ENCODE measurements at regions of chr17 and their contacts with region 1.

Region 1: GRCh38 chr17:21043286-21044232 is 748 bp upstream of the USP22 start:
- DNase-seq: peak; percentile 61
- ATAC-seq: peak; percentile 96
- H3K4me3 ChIP-seq: peak overlapping the region; percentile 52 to 54
- H3K27ac ChIP-seq: peak overlapping the region; percentile 90
- H3K4me1 ChIP-seq: peaks cover 13% of the 10 kb centered on the region; the same call in 1 of the 2 replicates
- H3K27me3 ChIP-seq: no peaks in the 10 kb centered on the region
- CTCF ChIP-seq: peak; percentile 94

Region 2: DNA sequence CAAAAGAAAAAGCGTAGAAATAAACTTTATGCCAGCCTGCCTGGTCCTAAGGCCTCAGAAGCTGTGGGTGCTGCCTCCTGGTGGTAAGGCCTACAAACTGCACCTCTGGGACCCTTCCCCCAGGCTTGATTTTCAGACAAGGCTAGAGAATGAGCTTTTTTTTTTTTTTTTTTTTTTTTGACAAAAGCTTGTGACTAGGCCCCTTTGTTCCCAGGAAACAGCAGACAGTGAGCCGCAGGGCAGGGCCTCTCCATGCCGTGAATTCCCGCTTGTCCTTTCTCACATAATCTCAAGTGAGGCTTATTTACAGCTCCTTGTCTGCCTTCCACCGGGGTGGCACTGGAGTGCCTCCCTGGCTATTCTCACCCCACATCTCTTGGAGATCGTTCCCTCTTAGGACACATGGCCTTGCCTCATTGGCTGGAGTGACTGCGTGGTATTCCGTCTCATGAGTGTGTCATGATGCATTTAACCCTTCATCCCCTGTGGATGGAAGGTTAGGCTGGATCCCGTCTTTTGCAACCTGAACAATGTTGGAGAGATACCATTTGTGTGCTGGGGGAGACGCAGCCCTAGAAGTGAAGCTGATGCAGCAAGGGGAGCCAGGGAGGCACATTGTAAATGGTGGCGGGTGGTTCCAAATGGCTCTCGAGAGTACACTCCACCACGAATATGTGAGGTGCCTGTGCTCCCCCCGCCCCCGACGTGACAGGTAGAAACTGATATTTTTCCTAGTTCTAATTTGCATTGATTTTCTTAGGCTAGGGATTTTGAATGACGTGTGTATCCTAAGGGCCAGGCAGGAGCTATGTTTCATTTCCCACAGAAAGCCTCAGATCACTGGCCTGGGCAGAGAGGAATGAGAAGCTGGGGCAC is 50.3 kb before region 1 on chr17:
- CTCF ChIA-PET with region 1: no interaction called
- POLR2A ChIA-PET with region 1: no interaction called
- in situ Hi-C with region 1: no loop called
- intact Hi-C with region 1: no loop called
- DNase-seq: peak; percentile 35
- ATAC-seq: no peak
- H3K4me3 ChIP-seq: no peak overlapping the region
- H3K27ac ChIP-seq: no peak overlapping the region
- H3K4me1 ChIP-seq: no peaks in the 10 kb centered on the region
- H3K27me3 ChIP-seq: no peaks in the 10 kb centered on the region
- CTCF ChIP-seq: peak; percentile 93

Region 3: DNA sequence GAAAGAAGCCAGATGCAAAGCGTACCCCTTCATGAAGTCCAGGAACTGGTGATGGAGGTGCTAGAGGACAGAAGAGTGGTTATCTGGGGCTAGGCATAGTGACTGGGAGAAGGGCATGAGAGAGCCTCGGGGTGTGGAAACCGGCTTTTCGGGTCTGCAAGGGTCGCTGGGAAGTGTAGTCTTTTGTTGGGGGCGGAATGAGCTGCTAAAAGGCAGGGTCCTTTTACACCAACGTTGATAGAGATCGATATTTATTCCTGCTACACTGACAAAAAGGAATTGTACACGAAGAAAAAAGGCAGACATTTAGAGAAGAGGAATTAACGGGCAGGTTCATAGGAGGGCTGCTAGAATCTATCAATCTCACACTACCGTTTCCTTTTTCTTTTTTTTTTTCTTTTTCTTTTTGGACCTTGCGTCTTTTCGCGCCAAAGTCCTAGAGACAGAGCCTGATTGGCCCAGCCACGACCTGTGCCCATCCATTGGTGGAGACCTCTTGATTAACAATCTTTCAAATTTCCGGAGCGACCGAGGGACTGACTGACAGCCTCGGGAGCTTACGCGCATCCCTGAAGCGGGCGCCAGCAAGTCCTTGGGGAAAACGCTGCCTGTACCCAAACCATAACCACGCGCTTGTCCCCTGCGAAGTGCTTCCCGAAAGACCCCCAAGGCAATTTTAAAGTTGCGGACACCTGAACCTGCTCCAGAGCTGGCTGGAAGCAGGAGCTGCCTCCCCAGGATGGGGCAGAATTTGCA is 55.6 kb after region 1 on chr17:
- CTCF ChIA-PET with region 1: interaction called, 19 read pairs
- POLR2A ChIA-PET with region 1: interaction called, 3 read pairs
- in situ Hi-C with region 1: no loop called
- intact Hi-C with region 1: no loop called
- DNase-seq: peak; percentile 55
- ATAC-seq: peak; percentile 99
- H3K4me3 ChIP-seq: peak overlapping the region; percentile 82 to 94
- H3K27ac ChIP-seq: peak overlapping the region; percentile 83
- H3K4me1 ChIP-seq: no peaks in the 10 kb centered on the region
- H3K27me3 ChIP-seq: no peaks in the 10 kb centered on the region
- CTCF ChIP-seq: no peak

Region 4: DNA sequence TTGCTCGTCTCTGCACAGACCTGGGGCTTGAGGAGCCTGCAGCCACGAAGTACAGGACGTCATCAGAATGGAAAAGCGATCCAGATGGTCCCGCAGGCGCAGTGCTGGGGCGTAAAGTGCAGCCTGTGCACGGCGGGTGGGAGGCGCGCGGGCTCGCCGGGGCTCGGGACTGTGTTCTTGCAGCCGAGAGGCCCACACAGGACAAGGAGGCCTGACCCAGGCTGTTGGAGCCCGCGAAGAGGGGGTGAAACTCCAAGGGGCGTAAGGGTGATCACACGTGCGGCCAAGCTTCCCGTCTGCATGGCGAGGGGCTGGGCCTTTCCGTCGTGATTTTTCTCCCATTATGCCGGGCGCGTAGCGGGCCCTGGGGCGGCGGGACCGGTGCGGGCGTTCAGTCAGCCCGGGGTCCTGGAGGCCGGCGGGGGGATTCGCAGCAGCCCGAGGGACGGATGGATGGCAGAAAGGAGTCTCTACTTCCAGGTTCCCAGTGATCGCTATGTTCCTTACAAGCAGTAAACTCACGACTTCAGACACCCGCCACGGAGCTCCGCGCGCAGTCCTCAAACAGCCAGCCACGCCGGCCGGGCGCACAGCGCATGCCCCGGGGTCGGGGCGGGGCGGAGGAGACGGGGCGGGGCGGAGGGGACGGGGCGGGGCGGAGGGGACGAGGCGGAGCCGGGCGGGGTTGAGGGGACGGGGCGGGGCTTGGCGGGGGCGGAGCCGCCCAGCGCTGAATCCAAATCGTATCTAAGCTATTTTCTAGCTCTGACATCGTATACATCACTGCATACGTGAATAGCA is 507.7 kb after region 1 on chr17:
- CTCF ChIA-PET with region 1: interaction called, 11 read pairs
- POLR2A ChIA-PET with region 1: no interaction called
- in situ Hi-C with region 1: no loop called
- intact Hi-C with region 1: no loop called
- DNase-seq: no peak
- ATAC-seq: peak; percentile 98
- H3K4me3 ChIP-seq: peak overlapping the region; percentile 65 to 72
- H3K27ac ChIP-seq: 0 out of 2 replicates have a peak overlapping the region, but pooled peaks have one; percentile 29
- H3K4me1 ChIP-seq: peaks cover 10% of the 10 kb centered on the region; the same call in 1 of the 2 replicates
- H3K27me3 ChIP-seq: no peaks in the 10 kb centered on the region; the same call in 1 of the 2 replicates
- CTCF ChIP-seq: no peak

Measured in Panc1 (cell line).